ENCODE measurements at regions of chr2 and their contacts with region 1.

Region 1: DNA sequence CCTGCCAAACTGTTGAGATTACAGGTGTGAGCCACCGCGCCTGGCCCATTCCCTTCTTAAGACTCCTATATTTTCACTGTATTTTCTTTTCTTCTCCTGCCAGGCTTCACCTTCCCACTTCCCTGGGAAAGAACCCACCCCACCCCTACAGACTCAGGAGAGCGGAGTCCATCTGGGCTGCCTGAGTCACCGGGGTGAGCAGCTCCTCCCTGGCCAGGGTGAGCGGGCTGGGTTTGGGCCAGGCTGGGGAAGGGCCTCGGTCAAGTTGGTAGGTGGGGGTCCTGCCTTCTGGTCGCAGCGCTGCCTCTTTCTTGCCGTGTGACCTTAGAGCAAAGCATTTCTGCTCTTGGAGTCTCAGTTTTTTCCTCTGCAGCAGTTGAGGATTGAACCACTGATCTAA is 2.1 kb upstream of the GAREM2 start:
- DNase-seq: no peak
- H3K4me3 Mint-ChIP-seq: no peak overlapping the region
- H3K27ac Mint-ChIP-seq: no peak overlapping the region
- H3K4me1 Mint-ChIP-seq: peaks cover 12% of the 10 kb centered on the region
- H3K27me3 Mint-ChIP-seq: peaks cover 20% of the 10 kb centered on the region

Region 2: GRCh38 chr2:25867396-25868003 is 303.3 kb before region 1 on chr2:
- CTCF ChIA-PET with region 1: no interaction called
- intact Hi-C with region 1: no loop called
- DNase-seq: no peak
- H3K4me3 Mint-ChIP-seq: no peak overlapping the region
- H3K27ac Mint-ChIP-seq: no peak overlapping the region
- H3K4me1 Mint-ChIP-seq: peaks cover 7% of the 10 kb centered on the region
- H3K27me3 Mint-ChIP-seq: no peaks in the 10 kb centered on the region

Region 3: DNA sequence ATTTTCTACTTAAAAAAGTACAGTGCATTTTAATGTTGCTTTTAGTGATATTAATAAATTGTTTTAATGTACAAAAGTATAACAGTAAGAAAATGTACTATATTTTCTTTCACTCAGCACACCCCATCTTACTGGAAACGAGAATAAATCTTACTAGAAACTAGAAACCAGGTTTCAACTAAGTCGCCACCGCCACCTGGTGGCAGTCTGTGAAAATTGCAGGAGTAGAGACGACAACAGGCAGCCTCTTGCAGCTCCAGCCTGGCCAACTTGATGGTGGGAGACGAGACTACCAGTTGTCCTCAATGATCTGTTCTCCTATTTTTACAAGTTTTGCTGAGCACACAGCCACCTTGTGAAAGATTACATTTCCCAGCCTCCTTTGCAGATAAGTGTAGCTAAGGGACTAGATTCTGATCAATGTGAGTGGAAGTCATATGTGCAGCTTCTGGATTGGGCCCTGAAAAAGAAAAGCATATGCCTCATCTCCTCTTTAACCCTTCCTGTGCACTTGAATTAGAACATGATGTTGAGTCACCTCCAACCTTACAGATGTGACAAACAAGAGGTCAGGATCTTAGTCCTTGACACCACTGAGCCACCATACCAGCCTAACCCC is 298.4 kb after region 1 on chr2:
- CTCF ChIA-PET with region 1: interaction called, 4 read pairs
- intact Hi-C with region 1: loop called (anchors 1 kb)
- DNase-seq: peak; percentile 88
- H3K4me3 Mint-ChIP-seq: no peak overlapping the region
- H3K27ac Mint-ChIP-seq: no peak overlapping the region
- H3K4me1 Mint-ChIP-seq: peaks cover 2% of the 10 kb centered on the region
- H3K27me3 Mint-ChIP-seq: no peaks in the 10 kb centered on the region

Measured in activated naive CD4-positive, alpha-beta T cell treated with anti-CD3 and anti-CD28 coated beads for 36 hours (primary cell).